Brain microvascular endothelial cell (primary cell): ENCODE measurements at regions of chr12 and their contacts with region 1.

Region 1: GRCh38 chr12:122752464-122753318 is at the start of gene DENR:
- DNase-seq: peak; percentile 94
- H3K4me3 ChIP-seq: peak within 1 kb of the TSS; percentile 94
- H3K27ac ChIP-seq: peak within 1 kb of the TSS; percentile 83
- H3K27me3 ChIP-seq: no peaks in the 10 kb centered on the region
- CTCF ChIP-seq: peak; percentile 89

Region 2: DNA sequence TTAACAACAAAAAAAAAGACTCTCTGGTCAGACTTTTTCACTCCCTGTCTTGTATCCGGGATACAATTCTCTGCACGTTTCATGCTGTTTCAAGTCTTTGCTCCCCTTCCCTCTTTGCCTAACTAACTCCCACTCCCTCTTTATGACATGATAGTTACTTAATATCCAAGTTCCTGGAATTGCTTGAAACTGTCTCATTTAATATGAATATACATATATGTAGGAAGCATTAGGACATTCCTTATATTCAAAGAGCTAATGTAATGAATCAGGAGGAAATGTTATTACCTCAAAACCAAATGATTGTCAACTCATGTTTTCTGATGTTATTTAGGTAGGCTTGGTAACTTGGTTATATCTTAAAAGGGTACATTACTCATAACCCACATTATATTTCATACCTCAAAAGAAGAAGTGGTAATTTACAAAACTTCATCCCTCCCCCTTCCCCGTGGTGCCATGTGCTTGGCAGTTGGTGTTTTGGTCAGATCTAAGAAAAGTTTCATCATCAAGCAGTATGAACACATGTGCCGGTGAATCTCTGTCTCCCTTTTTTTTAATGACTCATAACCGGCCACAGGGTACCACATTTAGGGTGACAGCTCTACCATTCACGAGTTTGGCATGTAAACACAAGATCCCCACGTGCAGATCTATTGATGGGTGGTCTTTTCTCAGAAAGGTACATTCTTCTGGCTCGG is 106.0 kb before region 1 on chr12:
- in situ Hi-C with region 1: loop called (anchors 25 kb)
- DNase-seq: peak; percentile 70
- H3K4me3 ChIP-seq: no peak overlapping the region
- H3K27ac ChIP-seq: no peak overlapping the region
- H3K27me3 ChIP-seq: no peaks in the 10 kb centered on the region
- CTCF ChIP-seq: no peak